ENCODE measurements at regions of chr2 and their contacts with region 1.

Region 1: DNA sequence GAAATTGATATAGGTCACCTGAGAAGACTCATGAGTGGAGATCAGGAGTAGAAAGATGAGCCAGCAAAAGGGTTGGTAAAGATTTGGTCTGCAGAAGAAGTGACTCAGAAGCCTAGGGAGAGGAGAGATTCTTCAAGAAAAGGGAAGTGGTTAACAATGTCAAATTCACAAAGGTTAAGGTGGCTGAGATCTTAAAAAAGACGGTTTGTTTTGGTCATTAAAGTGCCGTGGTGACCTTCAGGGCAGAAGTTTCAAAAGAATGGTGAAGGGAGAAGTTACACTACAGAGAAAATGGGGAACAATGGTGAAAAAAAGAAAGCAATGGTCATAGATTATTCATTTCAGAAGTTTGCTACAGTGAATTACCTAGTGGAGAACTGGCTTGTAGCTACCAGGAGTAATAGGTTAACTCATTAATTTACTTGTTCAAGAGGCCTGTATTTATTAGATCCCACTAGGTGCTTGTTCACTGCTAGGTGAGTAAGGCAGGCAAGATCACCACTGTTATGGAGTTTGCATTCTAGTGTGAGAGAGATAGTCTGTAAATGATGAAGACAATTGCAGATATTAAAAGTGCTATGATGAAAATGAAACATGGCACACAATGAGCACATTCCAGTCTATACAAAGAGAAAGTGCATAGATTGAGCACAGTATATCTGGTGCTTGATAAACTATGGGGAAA is 43.0 kb downstream of the FBXO48 start:
- DNase-seq: no peak
- H3K4me3 Mint-ChIP-seq: no peak overlapping the region
- H3K27ac Mint-ChIP-seq: no peak overlapping the region
- H3K4me1 Mint-ChIP-seq: peaks cover 2% of the 10 kb centered on the region
- H3K27me3 Mint-ChIP-seq: peaks cover 4% of the 10 kb centered on the region

Region 2: DNA sequence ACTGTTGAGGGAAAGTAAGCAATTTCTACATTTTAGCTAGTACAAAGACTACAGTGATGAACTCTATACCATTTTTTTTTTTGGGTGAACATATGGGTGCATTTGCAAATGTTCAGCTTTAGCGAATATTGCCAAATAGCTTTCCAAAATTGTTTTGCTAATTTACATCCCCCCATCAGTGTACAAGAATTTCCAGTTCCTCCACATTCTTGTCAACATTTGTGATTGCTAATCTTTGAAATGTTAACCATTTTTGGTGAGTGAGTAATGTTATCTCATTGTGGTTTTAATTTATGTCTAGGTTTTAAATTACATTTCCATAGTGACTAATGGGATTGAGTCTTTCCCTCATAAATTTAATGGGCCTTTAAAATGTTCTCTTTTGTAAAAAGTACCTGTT is 87.9 kb before region 1 on chr2:
- intact Hi-C with region 1: no loop called
- DNase-seq: no peak
- H3K4me3 Mint-ChIP-seq: no peak overlapping the region
- H3K27ac Mint-ChIP-seq: no peak overlapping the region
- H3K4me1 Mint-ChIP-seq: no peaks in the 10 kb centered on the region
- H3K27me3 Mint-ChIP-seq: peaks cover 41% of the 10 kb centered on the region

Region 3: GRCh38 chr2:68379184-68379708 is 44.9 kb before region 1 on chr2:
- intact Hi-C with region 1: loop called (anchors 2 kb)
- DNase-seq: no peak
- H3K4me3 Mint-ChIP-seq: no peak overlapping the region
- H3K27ac Mint-ChIP-seq: peak overlapping the region; percentile 75
- H3K4me1 Mint-ChIP-seq: peaks cover 25% of the 10 kb centered on the region
- H3K27me3 Mint-ChIP-seq: peaks cover 35% of the 10 kb centered on the region

Region 4: GRCh38 chr2:68385220-68385906 is 38.7 kb before region 1 on chr2:
- intact Hi-C with region 1: loop called (anchors 1 kb)
- DNase-seq: no peak
- H3K4me3 Mint-ChIP-seq: no peak overlapping the region
- H3K27ac Mint-ChIP-seq: no peak overlapping the region
- H3K4me1 Mint-ChIP-seq: peaks cover 36% of the 10 kb centered on the region
- H3K27me3 Mint-ChIP-seq: peaks cover 18% of the 10 kb centered on the region

Measured in activated T-helper 2 cell treated with anti-CD3 and anti-CD28 coated beads, Interferon-gamma antibody, Interleukin-2, Interleukin-4, amounts not matched to agents 10 μg/mL and 5 μg/mL and 100 μg/mL, durations not matched to agents 14 hours and 24 hours and 36 hours (primary cell).